ENCODE measurements at regions of chr20 and their contacts with region 1.

Region 1: DNA sequence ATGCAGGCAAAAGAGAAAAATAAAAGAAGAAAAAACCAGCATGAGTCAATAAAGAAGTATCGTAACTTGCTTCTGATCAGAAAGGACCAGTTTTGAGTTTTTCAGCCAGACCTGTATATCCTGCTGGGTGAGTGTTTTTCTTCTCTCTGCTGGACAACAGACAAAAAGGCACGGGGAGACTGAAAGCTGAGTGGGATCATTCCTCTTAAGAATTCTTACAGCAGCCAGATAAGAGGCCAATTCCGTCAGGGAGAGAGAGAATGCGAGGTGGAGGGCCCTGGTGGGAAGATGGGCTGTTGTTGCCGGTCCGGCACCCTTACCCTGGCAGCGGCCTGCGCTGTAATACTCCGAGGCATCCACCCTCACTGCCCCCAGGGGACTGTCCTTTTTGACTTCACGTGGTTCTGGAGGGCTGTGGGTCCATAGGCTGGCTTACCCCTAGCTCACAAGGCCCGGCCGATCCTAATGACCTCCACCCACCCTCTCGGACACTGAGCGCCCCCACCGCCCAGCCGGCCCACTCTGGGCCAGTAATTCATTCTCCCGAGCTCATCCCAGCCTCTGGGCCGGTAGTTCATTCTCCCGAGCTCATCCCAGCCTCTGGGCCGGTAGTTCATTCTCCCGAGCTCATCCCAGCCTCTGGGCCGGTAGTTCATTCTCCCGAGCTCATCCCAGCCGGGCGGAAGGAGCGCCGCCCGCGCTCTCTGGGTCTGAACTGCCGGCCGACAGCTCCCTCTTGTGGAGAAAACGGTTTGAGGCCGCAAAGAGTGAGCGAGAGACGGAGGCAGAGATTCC is 118.3 kb upstream of the SIRPA start:
- DNase-seq: peak; percentile 67 to 84 (median 70)
- H3K4me3 ChIP-seq: peak overlapping the region; percentile 73
- H3K4me3 Mint-ChIP-seq: peak overlapping the region; percentile 72 to 94 (median 79)
- H3K27ac ChIP-seq: no peak overlapping the region
- H3K27ac Mint-ChIP-seq: peak overlapping the region in 5 of 8 donors; percentile 2 to 91 (median 59)
- H3K4me1 ChIP-seq: peaks cover 9% of the 10 kb centered on the region
- H3K4me1 Mint-ChIP-seq: peaks cover 15 to 17% (median 16%) of the 10 kb centered on the region in 3 donors
- H3K27me3 ChIP-seq: no peaks in the 10 kb centered on the region
- H3K27me3 Mint-ChIP-seq: peaks cover 6 to 20% of the 10 kb centered on the region in 2 donors

Region 2: DNA sequence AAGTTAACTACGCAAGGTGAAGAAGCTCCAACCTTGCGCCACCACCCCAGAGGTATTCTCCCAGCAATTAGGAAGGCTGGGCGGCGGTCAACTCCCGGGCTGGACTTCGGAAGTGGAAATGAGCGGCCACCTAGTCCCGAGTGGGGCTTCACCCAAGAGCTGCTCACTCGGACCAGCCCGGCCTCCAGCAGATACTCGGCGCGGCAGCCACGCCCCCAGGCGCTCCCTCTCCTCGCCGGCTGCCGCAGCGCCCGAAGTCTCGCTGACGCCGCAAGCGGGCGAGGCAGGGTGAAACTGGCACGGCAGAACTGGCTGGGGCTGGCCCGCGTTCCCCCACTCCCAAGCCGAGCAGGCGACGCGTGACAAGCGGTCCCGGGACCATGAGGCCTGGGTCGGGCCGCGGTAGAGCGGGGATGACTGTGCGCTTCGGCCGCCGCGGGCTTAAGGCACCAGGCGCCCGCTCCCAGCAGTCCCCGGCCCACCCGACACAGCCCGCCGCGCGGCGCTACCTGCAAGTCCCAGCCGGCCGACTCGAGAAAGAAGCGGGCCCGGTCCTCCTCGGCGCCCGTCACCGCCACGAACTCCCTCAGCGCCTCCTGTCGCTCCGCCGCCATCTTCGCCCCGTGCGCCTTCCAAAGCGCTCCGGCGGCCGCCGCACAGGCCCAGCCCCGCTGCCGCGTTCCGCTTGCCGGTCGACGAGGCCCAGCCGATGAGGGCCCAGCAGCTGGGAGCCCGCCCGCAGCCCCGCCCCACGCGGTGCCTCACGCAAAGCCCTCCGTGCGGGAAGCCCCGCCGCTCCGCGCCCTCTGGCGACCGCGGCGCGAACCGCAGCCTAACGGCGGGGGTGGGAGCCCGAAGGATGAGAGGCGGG is 310.4 kb before region 1 on chr20 and contains the start of gene NSFL1C:
- CTCF ChIA-PET with region 1: interaction called, 11 read pairs
- POLR2A ChIA-PET with region 1: no interaction called
- DNase-seq: peak; percentile 95 to 98 (median 97)
- H3K4me3 ChIP-seq: peak within 1 kb of the TSS; percentile 62
- H3K4me3 Mint-ChIP-seq: peak within 1 kb of the TSS; percentile 85 to 91 (median 89)
- H3K27ac ChIP-seq: peak within 1 kb of the TSS; percentile 70
- H3K27ac Mint-ChIP-seq: peak within 1 kb of the TSS; percentile 81 to 93 (median 88)
- H3K4me1 ChIP-seq: peaks cover 35% of the 10 kb centered on the region
- H3K4me1 Mint-ChIP-seq: peaks cover 43 to 56% (median 51%) of the 10 kb centered on the region in 3 donors
- H3K27me3 ChIP-seq: no peaks in the 10 kb centered on the region
- H3K27me3 Mint-ChIP-seq: peaks cover 0 to 8% of the 10 kb centered on the region in 2 donors
- total RNA-seq, gene NSFL1C: 103 to 107 TPM

Region 3: GRCh38 chr20:1509237-1509636 is 267.6 kb before region 1 on chr20:
- CTCF ChIA-PET with region 1: interaction called, 18 read pairs
- POLR2A ChIA-PET with region 1: no interaction called
- DNase-seq: peak in 1 of 5 donors; percentile 18
- H3K4me3 ChIP-seq: no peak overlapping the region
- H3K4me3 Mint-ChIP-seq: no peak overlapping the region
- H3K27ac ChIP-seq: no peak overlapping the region
- H3K27ac Mint-ChIP-seq: no peak overlapping the region
- H3K4me1 ChIP-seq: no peaks in the 10 kb centered on the region
- H3K4me1 Mint-ChIP-seq: no peaks in the 10 kb centered on the region
- H3K27me3 ChIP-seq: no peaks in the 10 kb centered on the region
- H3K27me3 Mint-ChIP-seq: peaks cover 12 to 40% of the 10 kb centered on the region in 2 donors

Region 4: GRCh38 chr20:1533059-1533458 is 243.8 kb before region 1 on chr20:
- CTCF ChIA-PET with region 1: interaction called, 11 read pairs
- POLR2A ChIA-PET with region 1: no interaction called
- DNase-seq: no peak
- H3K4me3 ChIP-seq: no peak overlapping the region
- H3K4me3 Mint-ChIP-seq: no peak overlapping the region
- H3K27ac ChIP-seq: no peak overlapping the region
- H3K27ac Mint-ChIP-seq: no peak overlapping the region
- H3K4me1 ChIP-seq: no peaks in the 10 kb centered on the region
- H3K4me1 Mint-ChIP-seq: peaks cover 0 to 4% (median 0%) of the 10 kb centered on the region in 3 donors
- H3K27me3 ChIP-seq: no peaks in the 10 kb centered on the region
- H3K27me3 Mint-ChIP-seq: peaks cover 2 to 34% of the 10 kb centered on the region in 2 donors

Region 5: GRCh38 chr20:1555952-1556351 is 220.9 kb before region 1 on chr20:
- CTCF ChIA-PET with region 1: interaction called, 20 read pairs
- POLR2A ChIA-PET with region 1: no interaction called
- DNase-seq: peak in 2 of 5 donors; percentile 9 to 12
- H3K4me3 ChIP-seq: no peak overlapping the region
- H3K4me3 Mint-ChIP-seq: no peak overlapping the region
- H3K27ac ChIP-seq: no peak overlapping the region
- H3K27ac Mint-ChIP-seq: peak overlapping the region in 1 of 8 donors; percentile 38
- H3K4me1 ChIP-seq: no peaks in the 10 kb centered on the region
- H3K4me1 Mint-ChIP-seq: peaks cover 0 to 8% (median 7%) of the 10 kb centered on the region in 3 donors
- H3K27me3 ChIP-seq: no peaks in the 10 kb centered on the region
- H3K27me3 Mint-ChIP-seq: peaks cover 0 to under 1% of the 10 kb centered on the region in 2 donors

Region 6: DNA sequence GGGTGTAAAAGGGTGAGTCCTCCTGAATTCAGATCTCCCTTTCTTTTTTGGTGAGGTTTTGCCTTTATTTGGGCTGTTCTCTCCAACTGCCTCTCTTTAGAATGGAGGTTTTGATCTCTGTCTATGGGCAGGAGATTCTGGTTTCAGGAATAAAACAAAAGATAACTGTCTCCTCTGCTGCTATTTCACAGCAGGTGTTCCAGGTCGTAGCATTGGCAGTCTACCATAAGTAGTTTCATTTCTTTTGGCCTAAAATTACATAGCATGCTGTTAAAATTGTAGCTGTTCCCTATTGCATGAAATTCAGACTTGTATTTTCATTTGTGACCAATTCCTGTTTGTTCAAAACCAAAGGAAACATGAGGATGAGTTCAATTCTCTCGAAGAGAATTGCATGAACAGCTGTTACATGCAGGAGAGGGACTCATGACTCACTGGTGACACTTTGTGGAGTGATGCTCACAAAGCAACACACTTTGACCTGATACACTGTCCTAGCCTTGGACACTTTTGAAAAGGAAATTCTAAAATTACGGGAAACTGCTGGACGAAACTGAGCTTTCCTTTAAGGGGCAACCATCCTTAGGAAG is 42.5 kb before region 1 on chr20:
- CTCF ChIA-PET with region 1: interaction called, 16 read pairs
- POLR2A ChIA-PET with region 1: no interaction called
- DNase-seq: peak in 3 of 5 donors; percentile 22 to 51 (median 33)
- H3K4me3 ChIP-seq: no peak overlapping the region
- H3K4me3 Mint-ChIP-seq: no peak overlapping the region
- H3K27ac ChIP-seq: no peak overlapping the region
- H3K27ac Mint-ChIP-seq: peak overlapping the region in 2 of 8 donors; percentile 21 to 36
- H3K4me1 ChIP-seq: peaks cover 24% of the 10 kb centered on the region
- H3K4me1 Mint-ChIP-seq: peaks cover 7 to 14% (median 7%) of the 10 kb centered on the region in 3 donors
- H3K27me3 ChIP-seq: no peaks in the 10 kb centered on the region
- H3K27me3 Mint-ChIP-seq: peaks cover 2 to 10% of the 10 kb centered on the region in 2 donors

Region 7: DNA sequence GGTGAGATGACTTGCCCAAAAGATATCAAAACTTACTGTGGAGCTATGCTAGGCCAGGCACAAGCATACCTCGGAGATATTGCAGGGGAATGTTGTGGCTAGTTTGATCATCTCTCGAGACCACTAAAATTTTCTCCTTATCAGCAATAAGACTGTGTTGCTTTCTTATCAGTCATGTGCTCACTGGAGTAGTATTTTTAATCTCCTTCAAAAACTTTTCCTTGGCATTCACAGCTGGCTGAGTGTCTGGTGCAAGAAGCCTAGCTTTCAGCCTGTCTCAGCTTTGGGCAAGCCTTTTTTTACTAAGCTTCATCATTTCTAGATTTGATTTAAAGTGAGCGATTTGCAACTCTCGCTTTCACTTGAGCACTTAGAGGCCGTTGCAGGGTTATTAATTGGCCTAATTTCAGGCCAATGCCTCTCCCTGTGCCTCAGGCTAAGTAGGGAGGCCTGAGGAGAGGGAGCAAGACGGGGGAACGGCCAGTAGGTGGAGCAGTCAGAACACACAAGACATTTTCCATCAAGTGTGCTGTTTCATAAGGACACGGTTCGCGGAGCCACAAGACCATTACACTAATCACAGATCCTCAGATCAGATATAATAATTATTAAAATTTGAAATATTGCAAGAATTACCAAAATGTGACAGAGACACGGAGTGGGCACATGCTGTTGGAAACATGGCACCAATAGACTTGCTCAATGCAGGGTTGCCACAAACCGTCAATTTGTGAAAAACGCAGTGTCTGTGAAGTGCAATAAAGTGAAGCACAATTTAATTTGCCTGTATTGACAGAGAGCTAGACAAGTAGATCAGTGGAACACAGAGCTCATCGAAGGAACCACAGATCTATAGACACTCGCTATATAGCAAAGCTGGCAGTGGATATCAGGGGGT is 12.5 kb before region 1 on chr20:
- CTCF ChIA-PET with region 1: interaction called, 35 read pairs
- POLR2A ChIA-PET with region 1: no interaction called
- DNase-seq: peak; percentile 10 to 62 (median 27)
- H3K4me3 ChIP-seq: no peak overlapping the region
- H3K4me3 Mint-ChIP-seq: no peak overlapping the region
- H3K27ac ChIP-seq: no peak overlapping the region
- H3K27ac Mint-ChIP-seq: no peak overlapping the region
- H3K4me1 ChIP-seq: no peaks in the 10 kb centered on the region
- H3K4me1 Mint-ChIP-seq: peaks cover 1 to 4% (median 4%) of the 10 kb centered on the region in 3 donors
- H3K27me3 ChIP-seq: no peaks in the 10 kb centered on the region
- H3K27me3 Mint-ChIP-seq: peaks cover 0 to 7% of the 10 kb centered on the region in 2 donors

Region 8: DNA sequence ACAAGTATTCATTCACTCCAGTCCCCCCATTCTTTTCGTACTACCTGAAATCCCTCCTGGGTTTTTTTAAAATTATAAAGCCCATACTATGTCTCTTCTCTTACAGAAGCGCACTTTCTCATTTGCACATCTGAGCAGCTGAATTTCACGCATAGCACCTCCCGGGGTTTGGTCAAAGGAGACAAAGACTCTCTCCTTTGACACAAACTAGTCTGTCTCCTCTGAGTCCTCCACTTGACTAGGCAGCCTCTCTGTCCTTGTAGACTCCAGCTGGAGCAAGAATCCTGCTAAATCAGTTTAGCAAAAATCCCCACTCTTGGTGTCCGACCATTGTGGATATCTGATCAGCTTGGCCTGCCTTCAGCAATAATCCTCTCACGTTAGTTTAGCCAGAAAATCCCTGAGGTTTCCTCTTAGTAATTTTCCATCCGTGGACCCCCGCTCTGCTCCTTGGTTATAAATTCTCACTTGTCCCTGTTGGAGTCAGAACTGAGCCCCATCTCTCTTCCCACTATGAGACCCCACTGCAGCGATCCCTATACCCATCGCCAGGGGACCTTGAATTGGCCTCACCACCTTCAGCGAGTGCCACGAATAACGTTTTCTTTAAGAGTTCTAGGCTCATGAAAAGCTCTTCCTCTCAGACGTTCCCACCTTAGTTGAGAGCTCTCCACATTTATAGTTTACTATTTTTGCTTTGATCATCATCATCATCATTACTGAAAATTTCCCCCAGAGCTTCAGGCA is 188.0 kb after region 1 on chr20:
- CTCF ChIA-PET with region 1: no interaction called
- POLR2A ChIA-PET with region 1: no interaction called
- DNase-seq: no peak
- H3K4me3 ChIP-seq: no peak overlapping the region
- H3K4me3 Mint-ChIP-seq: peak overlapping the region in 3 of 7 donors; percentile 32 to 42 (median 33)
- H3K27ac ChIP-seq: no peak overlapping the region
- H3K27ac Mint-ChIP-seq: no peak overlapping the region
- H3K4me1 ChIP-seq: peaks cover 10% of the 10 kb centered on the region
- H3K4me1 Mint-ChIP-seq: peaks cover 7% of the 10 kb centered on the region in 3 donors
- H3K27me3 ChIP-seq: no peaks in the 10 kb centered on the region
- H3K27me3 Mint-ChIP-seq: peaks cover 31 to 36% of the 10 kb centered on the region in 2 donors